ENCODE measurements at regions of chr3 and their contacts with region 1.

Region 1: GRCh38 chr3:113552851-113553250 is 20.5 kb downstream of the SIDT1 start:
- DNase-seq: peak in 5 of 9 experiments; percentile 30 to 70 (median 55)
- ATAC-seq: peak; percentile 93
- H3K4me3 ChIP-seq: no peak overlapping the region
- H3K4me3 Mint-ChIP-seq: no peak overlapping the region
- H3K27ac ChIP-seq: no peak overlapping the region
- H3K27ac Mint-ChIP-seq: peak overlapping the region; percentile 12
- H3K4me1 ChIP-seq: no peaks in the 10 kb centered on the region
- H3K4me1 Mint-ChIP-seq: peaks cover 62% of the 10 kb centered on the region
- H3K27me3 ChIP-seq: no peaks in the 10 kb centered on the region
- H3K27me3 Mint-ChIP-seq: no peaks in the 10 kb centered on the region
- CTCF ChIP-seq: peak; percentile 40

Region 2: DNA sequence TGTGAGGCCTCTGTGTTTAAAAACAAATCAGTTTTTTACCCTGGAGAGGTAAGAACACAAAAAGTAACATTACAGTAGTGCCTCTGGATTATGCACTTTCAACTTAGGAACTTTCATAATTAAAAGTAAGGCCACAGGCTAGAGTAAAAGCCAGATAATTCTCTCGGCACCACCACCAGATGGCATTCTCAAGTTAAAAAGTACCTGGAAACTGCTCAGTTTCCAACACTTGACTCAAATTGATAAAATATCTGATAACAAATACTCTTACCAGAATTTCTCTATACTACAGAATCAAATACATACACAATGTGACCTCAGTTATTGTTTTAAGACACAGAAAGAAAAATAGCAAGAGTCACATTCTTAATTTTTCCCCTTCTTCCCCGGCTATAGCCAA is 57.8 kb before region 1 on chr3:
- CTCF ChIA-PET with region 1: interaction called, 43 read pairs
- POLR2A ChIA-PET with region 1: no interaction called
- intact Hi-C with region 1: loop called (anchors 1 kb)
- DNase-seq: peak in 6 of 9 experiments; percentile 38 to 67 (median 54)
- ATAC-seq: no peak
- H3K4me3 ChIP-seq: no peak overlapping the region
- H3K4me3 Mint-ChIP-seq: no peak overlapping the region
- H3K27ac ChIP-seq: no peak overlapping the region
- H3K27ac Mint-ChIP-seq: no peak overlapping the region
- H3K4me1 ChIP-seq: no peaks in the 10 kb centered on the region
- H3K4me1 Mint-ChIP-seq: no peaks in the 10 kb centered on the region
- H3K27me3 ChIP-seq: no peaks in the 10 kb centered on the region
- H3K27me3 Mint-ChIP-seq: no peaks in the 10 kb centered on the region
- CTCF ChIP-seq: peak; percentile 54

Region 3: DNA sequence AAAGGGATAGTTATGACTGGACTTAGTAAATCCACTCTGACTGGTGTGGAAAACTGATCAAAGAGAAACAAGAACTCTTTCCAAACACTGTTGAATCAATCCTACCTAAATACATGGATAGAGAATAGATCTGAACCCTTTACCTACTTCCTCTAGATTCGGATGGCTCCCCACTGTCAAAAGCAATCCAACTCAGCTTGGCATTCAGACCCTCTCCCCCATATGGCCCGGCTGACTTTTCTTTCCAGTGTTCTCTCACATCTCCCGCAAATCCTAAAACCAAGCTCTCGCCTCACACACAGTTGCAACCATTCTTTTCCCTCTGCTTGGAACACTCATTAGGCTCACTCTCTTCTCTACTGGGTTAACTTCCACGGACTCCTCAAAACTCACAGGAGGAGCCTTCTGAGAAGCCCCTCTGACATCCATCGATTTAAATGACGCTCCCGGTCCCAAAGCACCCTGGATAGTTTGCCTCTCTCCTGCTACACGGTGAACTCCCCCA is 38.5 kb before region 1 on chr3:
- CTCF ChIA-PET with region 1: interaction called, 10 read pairs
- POLR2A ChIA-PET with region 1: interaction called, 4 read pairs
- intact Hi-C with region 1: no loop called
- DNase-seq: no peak
- ATAC-seq: no peak
- H3K4me3 ChIP-seq: peak overlapping the region; percentile 82 to 96
- H3K4me3 Mint-ChIP-seq: no peak overlapping the region
- H3K27ac ChIP-seq: peak overlapping the region; percentile 89 to 91
- H3K27ac Mint-ChIP-seq: no peak overlapping the region
- H3K4me1 ChIP-seq: peaks cover 10% of the 10 kb centered on the region
- H3K4me1 Mint-ChIP-seq: peaks cover 18% of the 10 kb centered on the region
- H3K27me3 ChIP-seq: no peaks in the 10 kb centered on the region
- H3K27me3 Mint-ChIP-seq: peaks cover 3% of the 10 kb centered on the region
- CTCF ChIP-seq: no peak

Region 4: DNA sequence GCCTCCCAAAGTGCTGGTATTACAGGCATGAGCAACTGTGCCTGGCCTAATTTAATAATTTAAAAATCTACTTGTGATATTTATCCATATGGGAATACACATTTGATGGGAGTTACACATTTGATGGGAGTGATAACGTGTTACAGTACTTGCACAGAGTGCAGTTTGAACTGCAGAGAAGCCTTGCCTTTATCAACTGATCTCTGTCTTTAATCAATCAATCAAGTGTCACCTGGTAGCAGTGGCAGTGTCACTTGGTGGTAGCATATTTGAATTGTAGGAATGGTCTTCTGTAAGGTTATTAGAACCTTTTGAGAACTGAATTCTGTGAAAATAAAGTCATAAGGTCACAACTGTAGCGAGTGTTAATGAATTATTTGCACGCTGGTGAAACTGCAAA is 17.3 kb after region 1 on chr3:
- CTCF ChIA-PET with region 1: no interaction called
- POLR2A ChIA-PET with region 1: no interaction called
- intact Hi-C with region 1: no loop called
- DNase-seq: no peak
- ATAC-seq: no peak
- H3K4me3 ChIP-seq: no peak overlapping the region
- H3K4me3 Mint-ChIP-seq: no peak overlapping the region
- H3K27ac ChIP-seq: no peak overlapping the region
- H3K27ac Mint-ChIP-seq: peak overlapping the region; percentile 5
- H3K4me1 ChIP-seq: no peaks in the 10 kb centered on the region
- H3K4me1 Mint-ChIP-seq: peaks cover 12% of the 10 kb centered on the region
- H3K27me3 ChIP-seq: no peaks in the 10 kb centered on the region
- H3K27me3 Mint-ChIP-seq: no peaks in the 10 kb centered on the region
- CTCF ChIP-seq: no peak

Measured in CD8-positive, alpha-beta T cell (primary cell).